HEK293T (cell line): ENCODE measurements at regions of chr22 and their contacts with region 1.

Region 1: GRCh38 chr22:39319270-39320022 is at the start of gene RPL3:
- DNase-seq: peak; percentile 97

Region 2: GRCh38 chr22:39175952-39176713 is 143.3 kb before region 1 on chr22:
- CTCF ChIA-PET with region 1: interaction called, 16 read pairs
- POLR2A ChIA-PET with region 1: interaction called, 34 read pairs
- DNase-seq: no peak

Region 3: GRCh38 chr22:39254789-39255298 is 64.6 kb before region 1 on chr22:
- CTCF ChIA-PET with region 1: no interaction called
- POLR2A ChIA-PET with region 1: interaction called, 15 read pairs
- DNase-seq: no peak

Region 4: GRCh38 chr22:39343259-39344048 is 24.0 kb after region 1 on chr22:
- CTCF ChIA-PET with region 1: interaction called, 7 read pairs
- POLR2A ChIA-PET with region 1: interaction called, 142 read pairs
- DNase-seq: peak; percentile 81

Region 5: DNA sequence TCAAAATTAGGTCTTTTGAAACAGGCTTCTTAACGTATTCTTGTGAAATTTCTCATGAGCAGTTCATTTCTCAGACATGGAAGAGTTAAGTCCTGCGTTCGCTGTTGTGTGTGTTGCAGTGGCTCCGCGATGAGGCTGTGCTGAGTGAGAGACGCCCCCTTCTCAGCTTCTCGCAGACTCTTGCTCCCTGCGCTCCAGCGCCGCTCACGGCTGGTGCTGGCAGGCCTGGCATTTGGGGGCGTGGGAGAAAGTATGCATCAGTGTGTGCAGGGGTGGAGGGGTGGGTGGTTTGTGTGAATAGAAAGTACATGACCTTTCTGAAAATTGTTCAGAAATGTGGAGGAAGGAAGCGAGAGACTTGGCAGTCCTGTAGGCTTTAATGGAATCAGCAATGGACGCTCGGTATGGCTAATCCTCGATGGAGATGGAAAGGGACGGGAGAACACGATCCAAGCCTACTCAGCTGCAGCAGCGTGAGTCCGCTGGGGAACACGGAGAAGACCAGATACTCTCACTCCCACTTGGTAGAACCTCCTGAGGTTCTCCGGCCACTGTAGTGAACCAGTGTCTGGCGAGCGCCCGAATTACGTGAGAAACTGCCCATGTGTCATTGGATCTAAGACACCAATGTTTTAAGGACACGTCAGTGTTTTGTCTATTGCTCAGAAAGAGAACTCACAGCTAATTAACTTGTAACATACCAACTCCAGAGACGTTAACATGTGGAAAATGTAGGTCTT is 86.1 kb after region 1 on chr22:
- CTCF ChIA-PET with region 1: no interaction called
- POLR2A ChIA-PET with region 1: interaction called, 22 read pairs
- DNase-seq: no peak

Region 6: GRCh38 chr22:39514373-39514973 is 195.0 kb after region 1 on chr22:
- CTCF ChIA-PET with region 1: no interaction called
- POLR2A ChIA-PET with region 1: interaction called, 24 read pairs
- DNase-seq: peak; percentile 47

Region 7: DNA sequence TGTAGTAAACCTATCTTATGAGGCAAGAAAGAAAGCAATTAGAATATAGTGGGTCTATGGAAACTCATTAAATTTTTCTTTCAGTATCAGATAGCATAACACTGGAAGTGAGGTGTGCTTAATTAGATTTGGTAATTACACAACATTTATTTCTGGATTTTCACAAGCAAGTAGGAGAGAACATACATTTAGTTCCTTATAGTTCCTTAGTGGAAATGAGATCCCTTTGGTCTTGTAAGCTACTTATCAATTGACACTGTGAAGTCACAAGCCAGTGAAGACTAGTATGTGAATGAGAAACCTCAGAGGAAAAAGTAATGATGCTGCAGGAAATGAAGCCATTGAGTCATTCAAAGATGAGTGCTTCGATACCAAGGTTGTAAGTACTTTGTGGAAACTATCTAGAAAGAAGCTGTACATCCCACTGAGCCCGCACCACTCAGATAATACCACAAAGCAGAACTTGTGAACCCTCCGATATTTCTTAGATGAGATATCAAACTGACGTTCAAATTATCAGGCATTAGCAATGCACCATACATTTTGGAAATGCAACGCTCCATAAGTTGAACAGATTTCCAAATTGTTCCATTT is 520.6 kb after region 1 on chr22:
- CTCF ChIA-PET with region 1: no interaction called
- POLR2A ChIA-PET with region 1: no interaction called
- DNase-seq: no peak